ENCODE measurements at regions of chr1 and their contacts with region 1.

Region 1: GRCh38 chr1:93692983-93693591 is 11.4 kb upstream of the BCAR3 start:
- DNase-seq: peak; percentile 26
- H3K4me3 Mint-ChIP-seq: no peak overlapping the region
- H3K27ac Mint-ChIP-seq: peak overlapping the region; percentile 63
- H3K4me1 Mint-ChIP-seq: no peaks in the 10 kb centered on the region
- H3K27me3 Mint-ChIP-seq: peaks cover 13% of the 10 kb centered on the region

Region 2: GRCh38 chr1:93758842-93759515 is 65.9 kb after region 1 on chr1:
- intact Hi-C with region 1: loop called (anchors 2 kb)
- DNase-seq: peak; percentile 4
- H3K4me3 Mint-ChIP-seq: no peak overlapping the region
- H3K27ac Mint-ChIP-seq: no peak overlapping the region
- H3K4me1 Mint-ChIP-seq: peaks cover 14% of the 10 kb centered on the region
- H3K27me3 Mint-ChIP-seq: no peaks in the 10 kb centered on the region

Region 3: GRCh38 chr1:93919780-93920179 is 226.7 kb after region 1 on chr1:
- intact Hi-C with region 1: no loop called
- DNase-seq: no peak
- H3K4me3 Mint-ChIP-seq: no peak overlapping the region
- H3K27ac Mint-ChIP-seq: no peak overlapping the region
- H3K4me1 Mint-ChIP-seq: no peaks in the 10 kb centered on the region
- H3K27me3 Mint-ChIP-seq: peaks cover 6% of the 10 kb centered on the region